CD4-positive, alpha-beta memory T cell (primary cell): ENCODE measurements at regions of chrX and their contacts with region 1.

Region 1: GRCh38 chrX:12894074-12895030 is 12.1 kb upstream of the TLR8 start:
- DNase-seq: peak in 4 of 5 donors; percentile 16 to 45 (median 28)
- H3K4me3 ChIP-seq: no peak overlapping the region
- H3K4me3 Mint-ChIP-seq: no peak overlapping the region
- H3K27ac ChIP-seq: no peak overlapping the region
- H3K27ac Mint-ChIP-seq: peak overlapping the region in 1 of 7 donors; percentile 16
- H3K4me1 ChIP-seq: no peaks in the 10 kb centered on the region
- H3K4me1 Mint-ChIP-seq: peaks cover 0 to 4% (median 2%) of the 10 kb centered on the region in 4 donors
- H3K27me3 ChIP-seq: no peaks in the 10 kb centered on the region
- H3K27me3 Mint-ChIP-seq: no peaks in the 10 kb centered on the region

Region 2: GRCh38 chrX:11143931-11144678 is 1750.2 kb before region 1 on chrX:
- CTCF ChIA-PET with region 1: no interaction called
- POLR2A ChIA-PET with region 1: no interaction called
- intact Hi-C with region 1: loop called (anchors 10 kb)
- DNase-seq: peak; percentile 41 to 62 (median 58)
- H3K4me3 ChIP-seq: no peak overlapping the region
- H3K4me3 Mint-ChIP-seq: peak overlapping the region in 6 of 8 donors; percentile 36 to 78 (median 59)
- H3K27ac ChIP-seq: no peak overlapping the region
- H3K27ac Mint-ChIP-seq: no peak overlapping the region
- H3K4me1 ChIP-seq: no peaks in the 10 kb centered on the region
- H3K4me1 Mint-ChIP-seq: peaks cover 0 to 4% (median 3%) of the 10 kb centered on the region in 4 donors
- H3K27me3 ChIP-seq: no peaks in the 10 kb centered on the region
- H3K27me3 Mint-ChIP-seq: peaks cover 1 to 6% of the 10 kb centered on the region in 2 donors

Region 3: GRCh38 chrX:12701628-12702027 is 192.7 kb before region 1 on chrX:
- CTCF ChIA-PET with region 1: no interaction called
- POLR2A ChIA-PET with region 1: no interaction called
- intact Hi-C with region 1: loop called (anchors 5 kb)
- DNase-seq: peak in 1 of 5 donors; percentile 1
- H3K4me3 ChIP-seq: no peak overlapping the region
- H3K4me3 Mint-ChIP-seq: no peak overlapping the region
- H3K27ac ChIP-seq: no peak overlapping the region
- H3K27ac Mint-ChIP-seq: peak overlapping the region in 1 of 7 donors; percentile 19
- H3K4me1 ChIP-seq: no peaks in the 10 kb centered on the region
- H3K4me1 Mint-ChIP-seq: no peaks in the 10 kb centered on the region
- H3K27me3 ChIP-seq: no peaks in the 10 kb centered on the region
- H3K27me3 Mint-ChIP-seq: peaks cover 8 to 11% of the 10 kb centered on the region in 2 donors

Region 4: GRCh38 chrX:12814420-12814819 is 79.9 kb before region 1 on chrX:
- CTCF ChIA-PET with region 1: interaction called, 17 read pairs
- POLR2A ChIA-PET with region 1: no interaction called
- intact Hi-C with region 1: loop called (anchors 1 kb)
- DNase-seq: peak in 4 of 5 donors; percentile 17 to 39 (median 26)
- H3K4me3 ChIP-seq: no peak overlapping the region
- H3K4me3 Mint-ChIP-seq: no peak overlapping the region
- H3K27ac ChIP-seq: no peak overlapping the region
- H3K27ac Mint-ChIP-seq: no peak overlapping the region
- H3K4me1 ChIP-seq: no peaks in the 10 kb centered on the region
- H3K4me1 Mint-ChIP-seq: no peaks in the 10 kb centered on the region
- H3K27me3 ChIP-seq: no peaks in the 10 kb centered on the region
- H3K27me3 Mint-ChIP-seq: no peaks in the 10 kb centered on the region

Region 5: GRCh38 chrX:12910423-12911121 is 16.2 kb after region 1 on chrX:
- CTCF ChIA-PET with region 1: no interaction called
- POLR2A ChIA-PET with region 1: no interaction called
- intact Hi-C with region 1: no loop called
- DNase-seq: no peak
- H3K4me3 ChIP-seq: no peak overlapping the region
- H3K4me3 Mint-ChIP-seq: no peak overlapping the region
- H3K27ac ChIP-seq: no peak overlapping the region
- H3K27ac Mint-ChIP-seq: no peak overlapping the region
- H3K4me1 ChIP-seq: no peaks in the 10 kb centered on the region
- H3K4me1 Mint-ChIP-seq: peaks cover 5 to 11% (median 10%) of the 10 kb centered on the region in 4 donors
- H3K27me3 ChIP-seq: no peaks in the 10 kb centered on the region
- H3K27me3 Mint-ChIP-seq: no peaks in the 10 kb centered on the region

Region 6: DNA sequence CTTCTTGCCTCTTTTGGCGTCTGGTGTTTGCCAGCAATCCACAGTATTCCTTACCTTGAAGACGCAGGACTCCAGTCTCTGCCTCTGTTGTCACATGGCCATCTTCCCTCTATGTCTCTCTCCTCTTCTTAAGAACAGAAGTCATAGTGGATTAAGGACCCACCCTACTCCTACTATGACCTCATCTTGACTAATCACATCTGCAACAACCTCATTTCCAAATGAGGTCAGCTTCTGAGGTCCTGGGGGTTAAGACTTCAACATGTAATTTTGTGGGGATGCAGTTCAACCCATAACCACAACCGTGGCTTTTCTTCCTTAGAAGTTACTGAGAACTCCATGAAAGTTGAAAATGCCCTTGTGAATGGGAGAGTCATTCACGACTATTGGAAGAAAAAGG is 35.3 kb after region 1 on chrX:
- CTCF ChIA-PET with region 1: no interaction called
- POLR2A ChIA-PET with region 1: no interaction called
- intact Hi-C with region 1: no loop called
- DNase-seq: no peak
- H3K4me3 ChIP-seq: no peak overlapping the region
- H3K4me3 Mint-ChIP-seq: no peak overlapping the region
- H3K27ac ChIP-seq: no peak overlapping the region
- H3K27ac Mint-ChIP-seq: no peak overlapping the region
- H3K4me1 ChIP-seq: no peaks in the 10 kb centered on the region
- H3K4me1 Mint-ChIP-seq: no peaks in the 10 kb centered on the region
- H3K27me3 ChIP-seq: no peaks in the 10 kb centered on the region
- H3K27me3 Mint-ChIP-seq: peaks cover 1 to 2% of the 10 kb centered on the region in 2 donors